K562 (cell line): ENCODE measurements at regions of chr2 and their contacts with region 1.

Region 1: GRCh38 chr2:20225294-20226151 is 593 bp upstream of the SDC1 start:
- DNase-seq: peak; percentile 67 to 78 (median 76)
- ATAC-seq: peak; percentile 91
- H3K4me3 ChIP-seq: peak overlapping the region; percentile 47
- H3K27ac ChIP-seq: no peak overlapping the region
- H3K4me1 ChIP-seq: peaks cover 0 to 29% of the 10 kb centered on the region in 2 experiments; a peak in 2 of 5 replicates
- H3K27me3 ChIP-seq: peaks cover 15 to 59% of the 10 kb centered on the region in 2 experiments; a peak in 3 of 5 replicates
- CTCF ChIP-seq: peak; percentile 57 to 72 (median 66)
- EP300 ChIP-seq: no peak
- POLR2A ChIP-seq: no peak
- RAD21 ChIP-seq: peak; percentile 85 to 86

Region 2: DNA sequence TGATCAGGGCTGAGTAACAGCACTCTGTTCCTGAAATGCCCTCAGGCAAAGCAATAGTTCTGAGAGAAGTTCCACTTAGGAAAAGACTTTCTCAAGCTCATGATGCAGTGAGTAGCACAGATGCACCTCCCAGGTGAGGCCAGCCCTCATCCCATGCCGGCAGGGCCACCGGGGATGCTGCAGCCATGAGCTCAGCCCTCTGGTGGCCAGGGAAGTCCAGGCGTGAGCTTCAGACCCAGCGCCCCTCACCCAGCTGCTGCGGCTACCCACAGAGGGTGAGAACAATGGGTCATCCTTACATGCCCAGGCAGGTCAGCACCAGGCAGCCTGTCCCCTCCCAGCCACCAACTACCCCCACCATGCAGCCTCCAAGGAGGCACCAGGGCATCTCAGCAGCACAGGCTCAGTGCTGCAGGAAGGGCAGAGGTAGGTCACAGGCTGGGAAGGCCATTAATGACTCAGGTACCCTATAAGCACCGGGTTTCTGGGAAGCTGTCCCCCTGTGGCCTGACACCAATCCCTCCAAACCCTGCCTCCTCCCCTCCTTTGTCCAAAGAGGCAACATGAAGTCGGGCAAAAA is 374.3 kb before region 1 on chr2:
- CTCF ChIA-PET with region 1: no interaction called
- POLR2A ChIA-PET with region 1: no interaction called
- in situ Hi-C with region 1: no loop called
- intact Hi-C with region 1: no loop called
- DNase-seq: no peak
- ATAC-seq: peak; percentile 56
- H3K4me3 ChIP-seq: no peak overlapping the region
- H3K27ac ChIP-seq: no peak overlapping the region
- H3K4me1 ChIP-seq: no peaks in the 10 kb centered on the region
- H3K27me3 ChIP-seq: peaks cover 14 to 75% of the 10 kb centered on the region in 2 experiments
- CTCF ChIP-seq: no peak; a peak in 1 of 6 replicates
- EP300 ChIP-seq: no peak
- POLR2A ChIP-seq: no peak
- RAD21 ChIP-seq: no peak

Region 3: GRCh38 chr2:20135631-20136050 is 89.9 kb before region 1 on chr2:
- CTCF ChIA-PET with region 1: interaction called, 3 read pairs
- POLR2A ChIA-PET with region 1: no interaction called
- in situ Hi-C with region 1: loop called (anchors 10 kb)
- intact Hi-C with region 1: loop called (anchors 1 kb)
- DNase-seq: peak; percentile 63 to 72 (median 70)
- ATAC-seq: peak; percentile 84
- H3K4me3 ChIP-seq: no peak overlapping the region
- H3K27ac ChIP-seq: no peak overlapping the region
- H3K4me1 ChIP-seq: peaks cover 3 to 14% of the 10 kb centered on the region in 2 experiments; a peak in 3 of 5 replicates
- H3K27me3 ChIP-seq: peaks cover 4 to 24% of the 10 kb centered on the region in 2 experiments; a peak in 3 of 5 replicates
- CTCF ChIP-seq: peak; percentile 74 to 79 (median 75)
- EP300 ChIP-seq: no peak
- POLR2A ChIP-seq: no peak
- RAD21 ChIP-seq: peak; percentile 72 to 77

Region 4: GRCh38 chr2:21146638-21147037 is 921.1 kb after region 1 on chr2:
- CTCF ChIA-PET with region 1: no interaction called
- POLR2A ChIA-PET with region 1: no interaction called
- in situ Hi-C with region 1: no loop called
- intact Hi-C with region 1: no loop called
- DNase-seq: no peak
- ATAC-seq: no peak
- H3K4me3 ChIP-seq: no peak overlapping the region
- H3K27ac ChIP-seq: no peak overlapping the region
- H3K4me1 ChIP-seq: no peaks in the 10 kb centered on the region
- H3K27me3 ChIP-seq: no peaks in the 10 kb centered on the region
- CTCF ChIP-seq: no peak
- EP300 ChIP-seq: no peak
- POLR2A ChIP-seq: no peak
- RAD21 ChIP-seq: no peak